WTC11 (cell line): ENCODE measurements at regions of chr17 and their contacts with region 1.

Region 1: DNA sequence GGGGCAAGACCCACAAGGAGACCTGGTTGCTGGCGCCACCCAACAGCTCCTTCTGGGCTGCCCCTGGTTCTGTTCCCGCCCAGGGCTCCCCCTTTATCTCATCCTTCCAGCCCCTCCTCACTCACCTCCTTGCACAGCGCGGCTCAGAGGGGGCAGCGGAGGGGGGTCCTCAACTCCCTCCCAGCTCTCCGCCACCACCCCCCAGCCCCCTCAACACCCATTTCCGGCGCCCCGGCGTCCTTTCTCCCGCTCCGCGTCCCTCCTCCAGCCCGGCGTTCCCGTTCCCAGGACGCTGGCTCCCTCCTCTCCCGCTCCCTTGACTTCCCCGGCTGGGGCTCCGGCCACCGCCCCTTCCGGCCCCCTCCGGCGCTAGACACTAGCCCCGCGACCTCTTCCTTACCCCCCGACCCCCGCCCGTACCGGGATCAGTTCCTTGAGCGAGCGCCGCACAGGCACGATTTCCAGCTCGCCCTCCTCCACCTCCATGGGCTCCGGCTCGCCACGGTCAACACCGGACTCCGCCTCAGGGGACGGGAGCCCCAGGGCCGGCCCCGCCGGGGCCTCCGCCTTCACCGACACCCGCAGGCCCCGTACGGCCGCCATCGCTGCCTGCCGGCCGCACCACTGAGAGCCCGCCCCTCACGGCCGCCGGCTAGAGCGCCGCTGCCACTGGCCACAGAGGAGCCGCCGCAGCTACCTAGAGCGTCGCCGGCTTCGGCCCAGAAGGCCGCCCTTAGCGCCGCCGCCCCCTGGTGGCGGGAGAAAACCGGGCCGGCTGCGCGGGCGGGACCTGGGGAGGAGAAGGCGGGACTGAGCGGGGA is at the start of gene NCBP3:
- DNase-seq: peak; percentile 84
- ATAC-seq: peak; percentile 96
- H3K4me3 Mint-ChIP-seq: peak within 1 kb of the TSS; percentile 93
- H3K27ac Mint-ChIP-seq: peak within 1 kb of the TSS; percentile 93
- H3K4me1 Mint-ChIP-seq: peaks cover 18% of the 10 kb centered on the region
- H3K27me3 Mint-ChIP-seq: no peaks in the 10 kb centered on the region
- CTCF ChIP-seq: peak; percentile 73
- total RNA-seq, gene NCBP3: 48.7 to 51.3 TPM (median 49.6 TPM) in 3 replicates

Region 2: GRCh38 chr17:3723556-3724369 is 122.1 kb before region 1 on chr17 and contains the start of gene HASPIN:
- CTCF ChIA-PET with region 1: interaction called, 10 read pairs
- POLR2A ChIA-PET with region 1: no interaction called
- DNase-seq: peak; percentile 91
- ATAC-seq: peak; percentile 88
- H3K4me3 Mint-ChIP-seq: peak within 1 kb of the TSS; percentile 96
- H3K27ac Mint-ChIP-seq: peak within 1 kb of the TSS; percentile 85
- H3K4me1 Mint-ChIP-seq: peaks cover 29% of the 10 kb centered on the region
- H3K27me3 Mint-ChIP-seq: no peaks in the 10 kb centered on the region
- CTCF ChIP-seq: no peak
- total RNA-seq, gene HASPIN: 30.0 to 30.8 TPM (median 30.4 TPM) in 3 replicates

Region 3: GRCh38 chr17:3792481-3792880 is 53.4 kb before region 1 on chr17:
- CTCF ChIA-PET with region 1: no interaction called
- POLR2A ChIA-PET with region 1: no interaction called
- DNase-seq: no peak
- ATAC-seq: no peak
- H3K4me3 Mint-ChIP-seq: no peak overlapping the region
- H3K27ac Mint-ChIP-seq: no peak overlapping the region
- H3K4me1 Mint-ChIP-seq: 0 out of 2 replicates have a peak, but pooled peaks cover 7% of the 10 kb centered on the region
- H3K27me3 Mint-ChIP-seq: no peaks in the 10 kb centered on the region
- CTCF ChIP-seq: no peak

Region 4: DNA sequence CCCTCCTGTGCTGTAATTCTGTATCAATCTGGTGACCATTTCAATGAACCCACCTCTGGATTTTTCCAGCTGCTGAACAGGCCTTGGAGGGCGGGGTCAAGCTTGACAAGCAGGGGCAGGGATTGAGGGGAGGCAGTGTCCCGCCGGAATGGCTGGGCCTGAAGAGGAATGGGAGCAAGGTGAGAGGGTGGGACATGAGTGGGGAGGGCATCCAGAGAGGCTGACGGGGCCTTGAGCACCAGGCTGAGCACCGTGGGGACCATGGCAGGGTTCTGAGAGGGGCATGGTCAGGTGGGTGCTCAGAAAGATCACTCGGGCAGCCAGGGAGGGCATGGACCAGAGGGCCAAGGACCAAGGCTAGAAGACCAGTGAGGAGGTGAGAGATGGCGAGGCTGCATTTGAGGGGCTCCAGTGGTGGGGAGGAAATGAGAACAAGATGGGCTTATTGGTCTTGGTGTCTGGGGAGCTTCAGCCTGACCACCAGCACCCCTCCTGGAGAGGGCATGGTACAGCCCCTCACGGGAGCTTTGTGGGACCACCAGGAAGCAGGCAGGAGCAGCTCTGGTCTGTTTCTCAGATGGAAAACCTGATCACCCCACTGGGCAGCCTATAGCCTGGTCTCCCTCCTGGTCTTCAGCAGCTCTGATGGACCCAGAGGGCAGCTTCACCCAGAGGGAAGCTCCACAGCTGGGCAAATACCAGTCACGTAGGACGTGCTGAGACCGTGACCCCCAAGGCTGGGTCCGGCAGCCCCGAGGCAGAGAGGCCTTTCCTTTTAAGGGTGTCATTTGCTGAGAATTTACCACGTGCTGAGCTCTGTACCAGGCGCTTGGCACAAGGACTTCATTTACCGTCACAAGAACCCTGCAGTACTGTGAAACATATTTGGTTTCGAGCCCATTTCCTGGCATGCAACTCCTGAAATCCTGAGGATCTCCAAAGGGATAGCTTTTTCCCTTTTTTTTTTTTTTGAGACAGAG is 11.6 kb after region 1 on chr17:
- CTCF ChIA-PET with region 1: interaction called, 43 read pairs
- POLR2A ChIA-PET with region 1: interaction called, 6 read pairs
- DNase-seq: no peak
- ATAC-seq: peak; percentile 57
- H3K4me3 Mint-ChIP-seq: no peak overlapping the region
- H3K27ac Mint-ChIP-seq: no peak overlapping the region
- H3K4me1 Mint-ChIP-seq: no peaks in the 10 kb centered on the region
- H3K27me3 Mint-ChIP-seq: no peaks in the 10 kb centered on the region; the same call in 1 of the 2 replicates
- CTCF ChIP-seq: no peak

Region 5: GRCh38 chr17:3865176-3865575 is 19.3 kb after region 1 on chr17:
- CTCF ChIA-PET with region 1: interaction called, 43 read pairs
- POLR2A ChIA-PET with region 1: interaction called, 3 read pairs
- DNase-seq: no peak
- ATAC-seq: no peak
- H3K4me3 Mint-ChIP-seq: no peak overlapping the region
- H3K27ac Mint-ChIP-seq: no peak overlapping the region
- H3K4me1 Mint-ChIP-seq: no peaks in the 10 kb centered on the region
- H3K27me3 Mint-ChIP-seq: no peaks in the 10 kb centered on the region
- CTCF ChIP-seq: no peak

Region 6: DNA sequence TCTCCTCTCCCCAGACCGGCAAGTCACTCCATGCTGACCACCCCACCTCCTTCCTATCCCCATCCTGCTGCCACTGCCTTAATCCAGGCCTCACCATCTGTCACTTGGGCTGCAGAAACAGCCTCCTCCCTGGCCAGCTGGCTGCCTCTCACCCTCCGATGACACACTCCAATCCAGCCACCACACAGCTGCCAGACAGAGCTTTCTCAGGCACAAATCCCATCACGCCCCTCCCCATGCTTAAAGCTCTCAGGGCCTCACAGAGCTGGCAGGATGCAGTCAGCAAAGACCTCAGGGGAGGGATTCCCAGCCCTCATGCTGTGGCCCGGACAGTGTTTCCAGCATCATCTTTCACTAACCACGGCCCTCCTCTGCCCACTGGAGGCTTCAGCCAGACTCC is 33.4 kb after region 1 on chr17:
- CTCF ChIA-PET with region 1: interaction called, 12 read pairs
- POLR2A ChIA-PET with region 1: no interaction called
- DNase-seq: no peak
- ATAC-seq: no peak
- H3K4me3 Mint-ChIP-seq: no peak overlapping the region
- H3K27ac Mint-ChIP-seq: peak overlapping the region; percentile 57; the same call in 1 of the 2 replicates
- H3K4me1 Mint-ChIP-seq: no peaks in the 10 kb centered on the region
- H3K27me3 Mint-ChIP-seq: no peaks in the 10 kb centered on the region; the same call in 1 of the 2 replicates
- CTCF ChIP-seq: no peak

Region 7: DNA sequence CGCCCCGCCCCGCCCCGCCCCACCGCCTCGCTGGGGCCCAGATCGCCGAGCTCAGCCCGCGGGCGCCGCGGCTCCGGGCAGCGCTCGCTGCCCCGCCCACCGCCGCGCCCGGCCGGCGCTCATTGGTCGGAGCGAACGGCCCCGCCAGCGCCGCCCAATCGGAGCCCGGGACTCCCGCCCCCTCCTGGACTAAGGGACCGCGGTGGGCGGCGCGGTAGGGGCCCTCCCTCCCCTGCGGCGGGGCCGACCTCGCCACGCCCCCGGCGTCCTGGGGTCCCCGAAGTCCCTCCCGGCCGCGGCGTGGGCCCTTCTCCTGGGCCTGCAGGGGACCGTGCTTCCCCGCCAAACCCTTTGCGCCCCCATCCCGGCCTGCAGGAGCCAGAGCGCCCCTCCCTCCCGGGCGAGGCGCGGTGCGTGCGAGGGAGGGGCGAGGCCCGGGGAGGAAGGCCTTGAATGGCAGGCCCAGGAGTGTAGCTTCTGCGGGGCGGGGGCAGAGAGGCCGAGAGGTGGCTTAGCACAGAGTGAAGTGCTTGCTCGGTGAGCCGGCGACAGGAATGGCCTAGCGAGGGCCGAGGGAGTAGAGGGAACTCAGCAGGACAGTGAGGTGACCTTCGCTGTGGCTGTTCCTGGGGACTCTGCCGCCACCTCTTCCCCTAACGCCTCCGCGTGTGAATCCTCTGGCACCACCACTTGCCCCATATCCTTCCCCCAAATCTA is 47.3 kb after region 1 on chr17 and contains the start of gene CAMKK1:
- CTCF ChIA-PET with region 1: interaction called, 22 read pairs
- POLR2A ChIA-PET with region 1: interaction called, 7 read pairs
- DNase-seq: peak; percentile 86
- ATAC-seq: peak; percentile 80
- H3K4me3 Mint-ChIP-seq: peak within 1 kb of the TSS; percentile 68
- H3K27ac Mint-ChIP-seq: peak within 1 kb of the TSS; percentile 90
- H3K4me1 Mint-ChIP-seq: peaks cover 29% of the 10 kb centered on the region
- H3K27me3 Mint-ChIP-seq: peaks cover 7% of the 10 kb centered on the region; the same call in 1 of the 2 replicates
- CTCF ChIP-seq: no peak
- total RNA-seq, gene CAMKK1: 8.0 to 9.6 TPM (median 8.7 TPM) in 3 replicates

Region 8: DNA sequence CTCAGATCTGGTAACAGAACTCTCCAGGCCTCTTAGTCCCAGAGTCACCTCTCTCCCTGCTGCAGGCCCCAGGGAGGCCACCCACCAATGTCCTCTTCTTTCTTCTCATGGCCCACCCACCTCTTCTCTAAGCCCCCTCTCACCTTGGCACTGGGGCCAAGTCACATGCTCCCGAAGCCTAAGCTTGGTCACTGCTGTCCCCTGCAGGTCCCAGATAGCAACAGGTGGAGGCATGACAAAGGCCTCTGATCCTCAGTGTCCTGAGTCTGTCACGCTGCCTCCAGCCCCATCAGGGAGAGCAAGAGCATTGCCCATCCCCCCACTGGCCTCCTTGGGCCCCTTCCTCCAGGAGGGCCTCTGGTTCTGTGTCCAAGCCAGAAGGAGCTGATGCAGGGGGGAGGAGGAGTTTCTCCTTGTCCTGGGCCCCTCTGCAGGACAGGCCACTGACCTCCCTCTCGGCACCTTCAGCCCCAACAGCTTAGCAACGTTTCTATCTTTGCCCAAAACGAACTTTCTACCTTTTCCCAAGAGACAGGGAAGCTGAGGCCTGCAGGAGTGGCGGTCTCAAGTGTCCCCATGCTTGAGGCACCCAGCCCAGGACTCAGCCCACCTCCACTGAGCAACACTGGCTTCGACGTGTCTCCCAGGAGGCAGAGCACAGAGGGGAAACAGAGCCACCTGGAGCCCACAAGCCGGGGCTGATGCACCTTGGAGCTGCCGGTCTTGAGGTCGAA is 61.8 kb after region 1 on chr17:
- CTCF ChIA-PET with region 1: interaction called, 34 read pairs
- POLR2A ChIA-PET with region 1: interaction called, 5 read pairs
- DNase-seq: peak; percentile 46
- ATAC-seq: peak; percentile 66
- H3K4me3 Mint-ChIP-seq: no peak overlapping the region
- H3K27ac Mint-ChIP-seq: 0 out of 2 replicates have a peak overlapping the region, but pooled peaks have one; percentile 51
- H3K4me1 Mint-ChIP-seq: peaks cover 13% of the 10 kb centered on the region
- H3K27me3 Mint-ChIP-seq: no peaks in the 10 kb centered on the region
- CTCF ChIP-seq: no peak